Right lobe of liver (tissue), 6 donors: ENCODE measurements at regions of chr11 and their contacts with region 1.

Region 1: DNA sequence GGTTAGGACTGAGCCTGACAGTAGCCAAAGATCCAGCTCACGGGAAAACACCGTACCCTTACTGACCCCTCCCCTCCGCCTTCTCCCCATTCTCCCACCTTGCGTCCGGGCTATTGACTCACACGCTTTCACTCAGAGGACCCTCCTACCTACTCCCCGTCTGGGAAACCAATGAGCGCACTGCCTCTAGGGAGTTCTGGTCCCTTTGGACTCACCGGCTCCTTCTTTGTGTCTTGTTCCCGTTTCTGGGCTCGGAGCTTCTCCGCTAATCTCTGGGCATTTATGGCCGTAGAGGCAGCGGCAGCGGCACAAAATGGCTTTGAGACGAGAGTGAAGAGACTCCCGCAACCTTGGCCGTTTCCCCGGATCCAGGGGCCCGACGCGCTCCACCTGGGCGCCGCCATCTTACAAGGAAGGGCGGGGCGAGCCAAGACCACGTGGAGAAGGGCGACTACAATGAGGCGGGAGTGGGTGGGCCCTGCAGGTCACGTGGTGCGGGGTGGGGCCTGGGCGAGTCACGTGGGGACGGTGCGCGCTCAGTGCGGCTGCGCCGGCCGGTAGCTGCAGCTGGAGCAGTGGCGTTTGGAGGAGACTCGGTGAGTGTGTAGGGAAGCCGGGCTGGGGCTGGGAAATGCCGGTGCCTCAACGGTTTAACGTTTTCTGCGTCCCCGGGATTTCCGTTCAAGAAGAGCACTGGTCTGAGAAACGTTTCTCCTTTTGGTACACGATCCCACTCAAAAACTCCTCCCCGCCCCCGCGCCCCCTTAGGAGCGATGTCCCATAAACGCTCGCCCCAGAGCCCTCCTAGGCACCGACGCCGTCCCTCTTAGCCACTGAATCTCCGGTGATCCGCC is at the starts of genes FAM118B and RPUSD4:
- DNase-seq: peak; percentile 98 to 99 (median 99)
- ATAC-seq: peak; percentile 98 to 99 (median 99)
- H3K4me3 ChIP-seq: peak within 1 kb of the TSS; percentile 57 to 86 (median 78)
- H3K27ac ChIP-seq: peak within 1 kb of the TSS in 2 of 3 donors; percentile 26 to 57
- H3K4me1 ChIP-seq: peaks cover 0 to 15% (median 4%) of the 10 kb centered on the region in 4 donors
- H3K27me3 ChIP-seq: no peaks in the 10 kb centered on the region
- CTCF ChIP-seq: no peak
- POLR2A ChIP-seq: peak; percentile 79
- total RNA-seq, gene FAM118B: 4.6 to 8.3 (median 5.8) TPM
- total RNA-seq, gene RPUSD4: 12.8 to 18.5 (median 14.2) TPM

Region 2: GRCh38 chr11:126268708-126269579 is 57.5 kb after region 1 on chr11 and contains the starts of genes FOXRED1 and SRPRA:
- intact Hi-C with region 1: loop called in 1 of 2 experiments (anchors 10 kb)
- DNase-seq: peak; percentile 100
- ATAC-seq: peak; percentile 97 to 99 (median 98)
- H3K4me3 ChIP-seq: peak within 1 kb of the TSS; percentile 82 to 91 (median 88)
- H3K27ac ChIP-seq: peak within 1 kb of the TSS; percentile 81 to 97 (median 86)
- H3K4me1 ChIP-seq: peaks cover 0 to 15% (median 4%) of the 10 kb centered on the region in 4 donors
- H3K27me3 ChIP-seq: no peaks in the 10 kb centered on the region
- CTCF ChIP-seq: no peak
- POLR2A ChIP-seq: peak; percentile 88
- total RNA-seq, gene FOXRED1: 18.6 to 50.2 (median 39.8) TPM
- total RNA-seq, gene SRPRA: 95.0 to 150 (median 122) TPM

Region 3: GRCh38 chr11:126431401-126432064 is 220.1 kb after region 1 on chr11:
- intact Hi-C with region 1: no loop called
- DNase-seq: no peak
- ATAC-seq: peak; percentile 63 to 71 (median 66)
- H3K4me3 ChIP-seq: no peak overlapping the region
- H3K27ac ChIP-seq: no peak overlapping the region
- H3K4me1 ChIP-seq: no peaks in the 10 kb centered on the region
- H3K27me3 ChIP-seq: no peaks in the 10 kb centered on the region
- CTCF ChIP-seq: no peak
- POLR2A ChIP-seq: no peak

Region 4: DNA sequence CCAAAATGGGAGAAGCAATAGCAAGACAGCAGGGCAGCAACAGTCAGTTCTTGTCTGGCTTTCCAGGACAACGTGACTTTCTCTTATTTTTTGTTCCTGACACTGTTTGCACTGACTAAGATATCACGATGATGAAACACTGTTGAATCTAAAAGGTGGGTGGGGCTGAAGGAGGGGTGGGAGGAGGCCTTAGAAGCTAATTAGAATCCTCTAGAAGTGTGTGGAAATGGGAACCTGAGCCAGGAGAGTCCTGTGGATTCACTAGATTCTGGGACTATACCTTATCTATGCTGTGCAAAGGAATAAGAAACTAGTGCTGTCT is 444.3 kb after region 1 on chr11:
- intact Hi-C with region 1: no loop called
- DNase-seq: peak in 1 of 3 donors; percentile 60
- ATAC-seq: peak; percentile 70 to 83 (median 80)
- H3K4me3 ChIP-seq: peak overlapping the region in 2 of 3 donors; percentile 53 to 60
- H3K27ac ChIP-seq: peak overlapping the region; percentile 1 to 91 (median 91)
- H3K4me1 ChIP-seq: peaks cover 0 to 39% (median 15%) of the 10 kb centered on the region in 4 donors
- H3K27me3 ChIP-seq: no peaks in the 10 kb centered on the region
- CTCF ChIP-seq: no peak
- POLR2A ChIP-seq: no peak

Region 5: GRCh38 chr11:126834149-126834548 is 622.7 kb after region 1 on chr11:
- intact Hi-C with region 1: no loop called
- DNase-seq: no peak
- ATAC-seq: no peak
- H3K4me3 ChIP-seq: no peak overlapping the region
- H3K27ac ChIP-seq: no peak overlapping the region
- H3K4me1 ChIP-seq: no peaks in the 10 kb centered on the region
- H3K27me3 ChIP-seq: no peaks in the 10 kb centered on the region
- CTCF ChIP-seq: no peak
- POLR2A ChIP-seq: no peak